Dorsolateral prefrontal cortex (tissue), 120 donors: ENCODE measurements at regions of chr5 and their contacts with region 1.

Region 1: DNA sequence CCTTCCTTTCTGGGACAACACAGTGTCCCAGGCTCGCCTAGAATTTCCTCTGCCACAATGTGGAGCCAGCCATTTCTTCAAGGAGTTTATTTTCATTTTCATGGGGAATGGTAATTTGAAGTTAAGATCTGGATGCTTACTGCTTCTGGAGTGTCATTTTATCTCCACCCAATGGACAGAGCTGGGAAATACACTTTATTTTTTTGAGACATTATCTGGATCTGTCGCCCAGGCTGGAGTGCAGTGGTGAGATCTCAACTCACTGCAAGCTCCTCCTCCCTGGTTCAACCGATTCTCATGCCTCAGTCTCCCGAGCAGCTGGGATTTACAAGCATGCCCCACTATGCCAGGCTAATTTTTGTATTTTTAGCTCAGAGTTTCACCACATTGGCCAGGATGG is 12.7 kb upstream of the THG1L start:
- DNase-seq: peak in 4 of 10 donors; percentile 14 to 41 (median 36)
- H3K4me3 ChIP-seq: peak overlapping the region in 19 of 59 donors; percentile 1 to 42 (median 13)
- H3K27ac ChIP-seq: peak overlapping the region in 28 of 59 donors; percentile 6 to 82 (median 52)
- H3K27me3 ChIP-seq: no peaks in the 10 kb centered on the region
- CTCF ChIP-seq: peak; percentile 45 to 87 (median 76)

Region 2: DNA sequence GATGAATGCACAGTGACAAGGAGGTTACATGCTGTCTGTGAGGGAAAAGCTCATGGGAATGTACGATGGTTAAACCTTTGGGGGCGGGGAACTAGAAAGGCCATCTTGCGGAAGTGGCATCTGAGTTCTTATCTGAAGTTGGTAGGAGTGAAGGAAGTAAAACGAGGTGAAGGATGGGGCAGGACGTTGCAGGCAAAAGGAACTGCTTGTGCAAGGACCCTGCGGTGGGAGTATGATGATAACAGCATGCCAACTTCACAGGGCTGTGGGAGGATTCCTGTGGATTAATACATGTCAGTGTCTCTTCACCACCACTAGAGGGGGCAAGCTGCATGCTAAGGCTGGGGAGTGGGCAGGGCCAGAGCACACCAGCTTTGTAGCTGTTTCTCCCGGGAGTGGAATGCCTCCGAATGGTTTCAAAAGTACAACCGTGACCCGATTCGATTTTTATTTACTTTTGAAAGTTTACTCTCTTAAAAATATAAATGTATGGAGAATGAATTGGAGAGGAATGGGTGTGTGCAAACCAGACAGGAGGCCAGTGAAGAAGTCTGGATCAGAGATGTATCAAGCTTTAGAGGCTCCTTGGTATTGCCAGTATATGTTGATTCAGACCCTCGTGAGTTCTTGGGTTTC is 390.1 kb before region 1 on chr5:
- intact Hi-C with region 1: loop called (anchors 1 to 5 kb)
- DNase-seq: peak in 8 of 10 donors; percentile 46 to 75 (median 67)
- H3K4me3 ChIP-seq: peak overlapping the region in 22 of 59 donors; percentile 1 to 44 (median 28)
- H3K27ac ChIP-seq: peak overlapping the region in 16 of 59 donors; percentile 0 to 60 (median 18)
- H3K27me3 ChIP-seq: no peaks in the 10 kb centered on the region
- CTCF ChIP-seq: peak; percentile 66 to 98 (median 89)

Region 3: GRCh38 chr5:157366741-157367674 is 351.5 kb before region 1 on chr5:
- intact Hi-C with region 1: loop called in 1 of 2 experiments (anchors 5 kb)
- DNase-seq: peak in 1 of 10 donors; percentile 39
- H3K4me3 ChIP-seq: no peak overlapping the region
- H3K27ac ChIP-seq: peak overlapping the region in 12 of 59 donors; percentile 2 to 45 (median 26)
- H3K27me3 ChIP-seq: no peaks in the 10 kb centered on the region
- CTCF ChIP-seq: peak in 54 of 56 donors; percentile 19 to 73 (median 49)

Region 4: GRCh38 chr5:157431544-157432200 is 286.8 kb before region 1 on chr5:
- intact Hi-C with region 1: loop called (anchors 1 to 5 kb)
- DNase-seq: peak in 2 of 10 donors; percentile 24 to 32
- H3K4me3 ChIP-seq: peak overlapping the region in 3 of 59 donors; percentile 11 to 40 (median 23)
- H3K27ac ChIP-seq: peak overlapping the region in 29 of 59 donors; percentile 2 to 72 (median 44)
- H3K27me3 ChIP-seq: no peaks in the 10 kb centered on the region
- CTCF ChIP-seq: peak; percentile 46 to 90 (median 72)

Region 5: GRCh38 chr5:157476702-157477408 is 241.7 kb before region 1 on chr5:
- intact Hi-C with region 1: loop called (anchors 2 to 10 kb)
- DNase-seq: peak in 3 of 10 donors; percentile 57 to 66 (median 62)
- H3K4me3 ChIP-seq: no peak overlapping the region
- H3K27ac ChIP-seq: peak overlapping the region in 26 of 59 donors; percentile 18 to 97 (median 58)
- H3K27me3 ChIP-seq: no peaks in the 10 kb centered on the region
- CTCF ChIP-seq: peak; percentile 50 to 95 (median 80)

Region 6: GRCh38 chr5:157563373-157563928 is 155.1 kb before region 1 on chr5:
- intact Hi-C with region 1: loop called (anchors 5 to 10 kb)
- DNase-seq: peak in 7 of 10 donors; percentile 43 to 78 (median 58)
- H3K4me3 ChIP-seq: peak overlapping the region in 16 of 59 donors; percentile 1 to 42 (median 14)
- H3K27ac ChIP-seq: peak overlapping the region in 56 of 59 donors; percentile 14 to 89 (median 68)
- H3K27me3 ChIP-seq: no peaks in the 10 kb centered on the region
- CTCF ChIP-seq: no peak

Region 7: DNA sequence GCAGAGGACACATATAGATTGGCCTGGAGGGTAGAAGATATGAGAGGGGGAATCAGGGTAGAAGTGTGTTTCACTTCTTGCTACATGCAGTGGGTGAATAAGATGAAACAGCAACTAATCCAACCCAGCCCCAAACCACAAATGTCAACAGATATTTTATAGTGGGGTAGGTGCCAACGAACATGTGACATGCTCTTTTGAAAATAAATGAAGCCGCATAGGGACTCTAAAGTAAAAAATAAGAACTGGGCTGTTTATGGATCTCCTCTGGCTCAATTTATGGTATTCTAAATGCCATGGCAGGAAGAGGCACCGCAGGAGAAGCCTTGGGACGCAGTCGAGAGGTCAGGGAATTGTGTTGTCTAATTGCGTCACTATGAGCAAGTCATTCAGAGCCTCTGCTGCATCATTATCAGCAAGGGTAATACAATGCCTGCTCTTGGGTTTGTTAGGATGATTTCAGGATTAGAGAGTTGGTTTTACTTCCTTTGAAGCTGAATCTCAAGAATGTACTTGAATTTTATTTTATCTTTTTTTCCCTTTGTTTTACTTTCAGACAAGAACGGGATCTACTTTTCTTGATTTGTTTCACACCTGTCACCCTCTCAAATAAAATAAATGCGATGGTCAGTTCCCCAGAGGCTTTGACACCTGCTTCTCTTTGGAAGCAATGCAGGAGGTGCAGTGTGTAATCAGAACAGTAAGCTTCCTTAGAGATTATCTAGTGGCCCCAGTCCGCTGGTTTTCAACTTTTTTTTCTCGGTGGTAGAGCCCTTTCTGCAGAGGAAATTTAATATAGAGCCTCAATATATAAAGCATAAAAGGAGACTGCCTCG is 516.0 kb after region 1 on chr5:
- intact Hi-C with region 1: no loop called
- DNase-seq: no peak
- H3K4me3 ChIP-seq: no peak overlapping the region
- H3K27ac ChIP-seq: no peak overlapping the region
- H3K27me3 ChIP-seq: peaks cover 0 to 3% (median 0%) of the 10 kb centered on the region in 45 donors
- CTCF ChIP-seq: no peak